ENCODE measurements at regions of chr10 and their contacts with region 1.

Region 1: DNA sequence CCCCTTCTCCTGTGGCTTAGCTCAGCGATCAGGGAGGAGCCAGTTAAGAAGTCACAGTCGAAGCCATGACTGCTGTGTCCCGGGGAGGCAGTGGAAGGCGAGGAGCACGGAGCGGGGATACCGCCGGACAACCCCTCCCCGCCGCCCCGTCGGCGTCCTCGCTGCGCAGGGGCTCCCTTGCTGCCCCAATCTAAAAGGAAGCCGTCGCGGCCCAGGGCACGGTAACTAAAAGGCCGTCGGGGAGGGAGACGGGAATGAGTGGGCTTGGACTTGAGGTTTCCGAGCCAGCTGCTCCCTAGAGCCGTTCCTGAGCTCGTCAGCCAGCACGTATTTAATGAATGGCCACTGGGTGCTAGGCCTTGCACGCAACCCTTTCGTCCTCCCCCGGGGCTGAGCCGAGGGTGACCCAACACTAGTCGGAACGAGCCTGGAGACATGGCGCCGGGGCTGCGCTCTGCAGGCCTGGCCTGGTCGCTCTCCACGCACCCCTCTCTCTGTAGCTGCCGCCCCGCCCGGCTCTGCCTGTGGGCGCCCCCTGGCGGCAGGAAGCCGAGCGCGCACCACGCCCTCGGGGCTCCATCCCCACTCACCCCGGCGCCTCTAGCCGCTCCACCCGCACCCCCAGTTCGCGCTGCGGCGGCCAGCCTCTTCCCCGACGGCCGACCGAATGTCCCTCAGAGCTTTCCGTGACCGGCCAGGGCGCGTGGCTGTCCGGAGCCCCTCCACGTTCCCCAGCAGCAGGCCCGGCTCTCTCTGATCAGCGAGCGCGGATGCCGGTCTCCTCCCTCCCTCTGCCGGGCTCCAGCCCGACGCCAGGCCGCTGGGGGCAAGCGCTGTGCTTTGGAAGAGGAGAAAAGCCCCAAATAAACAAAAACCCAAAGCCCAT is 29.3 kb upstream of the KCNK18 start:
- DNase-seq: peak in 1 of 2 experiments; percentile 96
- H3K4me3 ChIP-seq: peak overlapping the region; percentile 32 to 69 (median 42)
- H3K27ac ChIP-seq: no peak overlapping the region
- H3K4me1 ChIP-seq: peaks cover 0 to 23% (median 7%) of the 10 kb centered on the region in 4 experiments; a peak in 6 of 7 replicates
- H3K27me3 ChIP-seq: peaks cover 76 to 98% (median 92%) of the 10 kb centered on the region in 4 experiments
- CTCF ChIP-seq: peak; percentile 71 to 88 (median 81)
- EP300 ChIP-seq: no peak
- POLR2A ChIP-seq: no peak
- RAD21 ChIP-seq: peak; percentile 52 to 61; a peak in 3 of 4 replicates

Region 2: DNA sequence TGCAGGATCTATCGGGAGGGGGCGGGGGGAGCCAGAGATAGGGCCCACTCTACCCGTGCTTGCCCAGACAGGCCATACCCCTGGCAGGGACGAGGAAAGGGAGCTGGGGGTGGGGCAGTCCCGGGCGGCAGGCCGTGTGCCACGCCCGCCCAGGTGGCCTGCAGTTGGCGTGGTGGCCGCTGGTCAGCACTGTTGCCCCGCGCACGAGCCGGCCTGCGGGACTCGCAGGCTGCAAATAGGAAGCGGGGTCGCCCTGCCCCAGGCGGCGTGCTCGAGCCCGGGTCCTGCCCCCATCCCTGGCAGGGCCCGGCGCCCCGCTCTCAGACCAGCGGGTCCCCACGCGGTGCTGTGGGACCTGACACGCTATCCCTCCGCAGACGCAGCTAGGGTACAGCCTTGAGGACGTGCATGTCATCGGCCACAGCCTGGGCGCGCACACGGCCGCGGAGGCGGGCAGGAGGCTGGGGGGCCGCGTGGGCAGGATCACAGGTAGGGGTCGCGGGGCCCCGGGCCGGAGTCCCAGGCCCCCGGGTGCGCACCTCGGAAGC is 540.6 kb before region 1 on chr10:
- CTCF ChIA-PET with region 1: interaction called, 11 read pairs
- POLR2A ChIA-PET with region 1: no interaction called
- DNase-seq: peak; percentile 31 to 67
- H3K4me3 ChIP-seq: peak overlapping the region; percentile 44 to 75 (median 50)
- H3K27ac ChIP-seq: no peak overlapping the region
- H3K4me1 ChIP-seq: no peaks in the 10 kb centered on the region
- H3K27me3 ChIP-seq: peaks cover 0 to 4% (median 0%) of the 10 kb centered on the region in 4 experiments; a peak in 3 of 7 replicates
- CTCF ChIP-seq: peak; percentile 70 to 93 (median 92)
- EP300 ChIP-seq: no peak
- POLR2A ChIP-seq: no peak
- RAD21 ChIP-seq: peak; percentile 80 to 90

Region 3: DNA sequence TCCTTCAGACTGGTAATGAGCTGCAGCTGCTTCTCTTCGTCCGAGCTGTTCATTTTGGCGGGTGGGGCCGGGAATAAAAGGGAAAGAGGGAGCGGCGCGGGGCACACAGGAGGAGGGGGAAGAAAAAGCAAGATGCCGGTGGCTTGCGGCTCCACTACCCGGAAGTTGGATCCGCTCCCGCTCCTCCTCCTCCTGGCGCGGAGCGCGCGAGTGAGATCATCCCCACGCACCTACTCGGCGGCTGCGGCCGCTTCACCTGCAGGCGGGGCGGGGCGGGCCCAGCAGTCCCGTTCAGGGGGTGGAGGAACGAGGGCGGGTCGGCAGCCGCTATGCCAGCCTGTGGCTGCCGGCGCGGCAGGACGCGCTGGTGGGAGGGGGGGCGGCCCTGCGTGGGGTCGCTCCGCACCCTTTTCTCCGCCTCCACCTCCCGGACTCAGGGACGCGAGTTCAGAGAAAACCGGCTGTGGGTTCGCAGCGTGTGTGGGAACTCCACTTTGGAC is 163.0 kb before region 1 on chr10 and contains the start of gene SHTN1:
- CTCF ChIA-PET with region 1: interaction called, 15 read pairs
- POLR2A ChIA-PET with region 1: no interaction called
- DNase-seq: peak; percentile 31 to 78
- H3K4me3 ChIP-seq: peak within 1 kb of the TSS; percentile 68 to 95 (median 86)
- H3K27ac ChIP-seq: no peak within 1 kb of the TSS
- H3K4me1 ChIP-seq: peaks cover 0 to 11% (median 4%) of the 10 kb centered on the region in 4 experiments; a peak in 6 of 7 replicates
- H3K27me3 ChIP-seq: peaks cover 0 to 10% (median 4%) of the 10 kb centered on the region in 4 experiments; a peak in 2 of 7 replicates
- CTCF ChIP-seq: no peak
- EP300 ChIP-seq: no peak
- POLR2A ChIP-seq: no peak; a peak in 1 of 3 replicates
- RAD21 ChIP-seq: no peak
- total RNA-seq, gene SHTN1: 12.7 and 13.9 TPM in 2 replicates

Region 4: GRCh38 chr10:117112220-117112619 is 55.8 kb before region 1 on chr10:
- CTCF ChIA-PET with region 1: interaction called, 12 read pairs
- POLR2A ChIA-PET with region 1: no interaction called
- DNase-seq: no peak
- H3K4me3 ChIP-seq: no peak overlapping the region
- H3K27ac ChIP-seq: no peak overlapping the region
- H3K4me1 ChIP-seq: no peaks in the 10 kb centered on the region
- H3K27me3 ChIP-seq: no peaks in the 10 kb centered on the region; a peak in 1 of 7 replicates
- CTCF ChIP-seq: peak in 1 of 3 experiments; percentile 50; a peak in 1 of 4 replicates
- EP300 ChIP-seq: no peak
- POLR2A ChIP-seq: no peak
- RAD21 ChIP-seq: peak; percentile 30; a peak in 3 of 4 replicates

Region 5: GRCh38 chr10:117137031-117137910 is 30.8 kb before region 1 on chr10:
- CTCF ChIA-PET with region 1: interaction called, 212 read pairs
- POLR2A ChIA-PET with region 1: interaction called, 24 read pairs
- DNase-seq: peak in 1 of 2 experiments; percentile 74
- H3K4me3 ChIP-seq: peak overlapping the region; percentile 10 to 55 (median 30); a peak in 7 of 8 replicates
- H3K27ac ChIP-seq: no peak overlapping the region
- H3K4me1 ChIP-seq: peaks cover 3 to 32% (median 16%) of the 10 kb centered on the region in 4 experiments
- H3K27me3 ChIP-seq: peaks cover 96 to 99% (median 98%) of the 10 kb centered on the region in 4 experiments
- CTCF ChIP-seq: no peak
- EP300 ChIP-seq: no peak
- POLR2A ChIP-seq: no peak
- RAD21 ChIP-seq: no peak

Region 6: DNA sequence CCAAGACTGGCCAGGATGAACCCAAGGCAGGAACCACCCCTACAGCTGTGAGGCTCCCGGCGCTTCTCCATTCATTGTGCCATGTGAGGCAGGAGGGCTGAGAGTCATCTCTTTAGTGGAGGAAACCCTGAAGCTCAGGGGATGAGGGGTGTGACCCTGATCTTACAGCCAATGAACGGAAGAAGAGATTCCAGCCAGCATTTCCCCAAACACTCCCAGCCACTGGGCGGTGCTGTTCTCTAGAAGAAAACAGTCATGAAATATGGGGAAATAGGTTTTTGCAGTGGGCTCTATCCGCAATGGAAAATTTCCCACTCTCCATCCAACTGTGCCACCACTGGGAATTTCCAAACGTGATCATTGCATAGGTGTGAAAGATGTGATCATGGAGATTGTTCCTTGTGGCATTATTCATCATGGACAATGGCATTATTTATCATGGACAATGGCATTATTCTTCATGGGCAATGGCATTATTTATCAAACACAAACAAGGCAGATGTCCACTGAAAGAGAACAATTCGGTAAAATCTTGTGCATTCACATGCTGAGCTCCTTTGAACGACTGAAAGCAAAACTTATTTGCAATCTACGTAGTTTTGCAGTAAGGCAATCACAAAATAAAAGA is 58.9 kb after region 1 on chr10:
- CTCF ChIA-PET with region 1: no interaction called
- POLR2A ChIA-PET with region 1: no interaction called
- DNase-seq: peak in 1 of 2 experiments; percentile 65
- H3K4me3 ChIP-seq: no peak overlapping the region
- H3K27ac ChIP-seq: no peak overlapping the region
- H3K4me1 ChIP-seq: no peaks in the 10 kb centered on the region
- H3K27me3 ChIP-seq: no peaks in the 10 kb centered on the region
- CTCF ChIP-seq: peak; percentile 69 to 90 (median 80)
- EP300 ChIP-seq: no peak
- POLR2A ChIP-seq: no peak
- RAD21 ChIP-seq: peak; percentile 85 to 87

Region 7: GRCh38 chr10:117306674-117307073 is 138.6 kb after region 1 on chr10:
- CTCF ChIA-PET with region 1: no interaction called
- POLR2A ChIA-PET with region 1: no interaction called
- DNase-seq: no peak
- H3K4me3 ChIP-seq: no peak overlapping the region
- H3K27ac ChIP-seq: no peak overlapping the region
- H3K4me1 ChIP-seq: no peaks in the 10 kb centered on the region
- H3K27me3 ChIP-seq: no peaks in the 10 kb centered on the region
- CTCF ChIP-seq: no peak
- EP300 ChIP-seq: no peak
- POLR2A ChIP-seq: no peak
- RAD21 ChIP-seq: no peak

Region 8: DNA sequence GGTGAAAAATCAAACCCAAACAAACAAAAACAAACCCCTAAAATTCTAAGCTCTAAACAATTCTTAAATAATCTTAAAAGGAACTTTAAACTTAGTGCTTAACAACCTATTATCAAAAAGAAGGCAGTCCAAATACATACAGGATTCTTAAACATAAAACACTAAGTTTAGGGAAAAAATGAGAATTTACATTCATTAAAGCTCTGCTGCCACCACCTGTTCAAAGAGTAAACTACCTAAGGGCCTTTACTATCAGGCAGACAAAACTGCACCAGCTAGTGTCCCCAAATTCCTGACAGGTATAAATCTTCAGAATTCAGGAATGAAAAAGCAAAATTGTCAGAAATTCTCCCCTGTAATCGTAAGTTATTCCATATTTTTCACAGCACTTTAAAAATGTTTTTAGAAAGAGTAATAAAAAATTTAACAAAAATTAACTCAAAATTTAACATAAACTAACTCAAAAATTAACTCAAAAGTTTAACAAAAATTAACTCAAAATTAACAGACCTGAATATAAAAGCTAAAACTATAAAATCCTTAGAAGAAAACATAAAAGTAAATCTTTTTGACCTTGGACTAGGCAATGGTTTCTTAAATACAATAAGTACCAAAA is 152.1 kb after region 1 on chr10:
- CTCF ChIA-PET with region 1: no interaction called
- POLR2A ChIA-PET with region 1: no interaction called
- DNase-seq: no peak
- H3K4me3 ChIP-seq: no peak overlapping the region
- H3K27ac ChIP-seq: no peak overlapping the region
- H3K4me1 ChIP-seq: peaks cover 0 to 14% (median 3%) of the 10 kb centered on the region in 4 experiments; a peak in 4 of 7 replicates
- H3K27me3 ChIP-seq: no peaks in the 10 kb centered on the region
- CTCF ChIP-seq: peak in 2 of 3 experiments; percentile 56 to 71; a peak in 3 of 4 replicates
- EP300 ChIP-seq: no peak
- POLR2A ChIP-seq: no peak
- RAD21 ChIP-seq: peak; percentile 69 to 79

Measured in H1 (cell line).